BJ (cell line): ENCODE measurements at regions of chr19 and their contacts with region 1.

Region 1: DNA sequence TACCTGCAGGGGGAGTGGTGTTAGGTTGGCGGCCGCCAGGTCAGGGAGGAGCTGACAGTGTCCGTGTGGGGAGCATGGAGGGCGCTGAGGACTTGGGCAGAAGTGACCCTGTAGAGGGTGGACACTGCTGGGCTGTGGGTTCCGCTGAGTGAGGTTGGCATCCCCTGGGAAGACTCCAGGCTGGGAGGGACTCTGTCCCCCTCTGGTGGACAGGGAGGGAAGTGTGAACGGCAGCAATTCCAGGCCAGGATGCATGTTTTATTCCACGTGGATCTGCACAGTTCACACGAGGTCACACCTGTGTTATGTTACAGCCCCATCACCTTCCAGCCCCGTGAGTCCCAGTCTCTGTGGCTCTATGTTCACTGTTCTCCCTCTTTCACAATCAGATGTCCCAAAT is 1.7 kb upstream of the PSG1 start:
- DNase-seq: no peak
- H3K4me3 ChIP-seq: no peak overlapping the region
- H3K27me3 ChIP-seq: no peaks in the 10 kb centered on the region
- CTCF ChIP-seq: peak; percentile 53

Region 2: DNA sequence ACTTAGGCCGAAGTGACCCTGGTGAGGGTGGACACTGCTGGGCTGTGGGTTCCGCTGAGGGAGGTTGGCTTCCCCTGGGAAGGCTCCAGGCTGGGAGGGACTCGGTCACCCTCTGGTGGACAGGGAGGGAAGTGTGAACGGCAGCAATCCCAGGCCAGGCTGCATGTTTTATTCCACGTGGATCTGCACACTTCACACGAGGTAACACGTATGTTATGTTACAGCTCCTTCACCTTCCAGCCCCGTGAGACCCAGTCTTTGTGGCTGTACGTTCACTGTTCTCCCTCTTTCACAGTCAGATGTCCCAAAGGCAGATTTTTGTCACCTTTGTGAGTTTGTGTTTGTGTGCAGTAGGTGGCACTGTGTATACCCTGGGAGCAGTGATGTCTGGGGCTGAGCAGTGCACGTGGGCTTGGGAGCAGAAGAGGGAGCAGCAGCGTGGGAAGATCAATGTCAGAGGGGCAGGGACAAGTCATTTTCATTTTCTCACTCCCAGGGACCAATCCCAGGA is 38.3 kb after region 1 on chr19:
- CTCF ChIA-PET with region 1: interaction called, 15 read pairs
- POLR2A ChIA-PET with region 1: no interaction called
- DNase-seq: no peak
- H3K4me3 ChIP-seq: no peak overlapping the region
- H3K27me3 ChIP-seq: no peaks in the 10 kb centered on the region
- CTCF ChIP-seq: peak; percentile 49

Region 3: GRCh38 chr19:43311706-43312105 is 430.5 kb after region 1 on chr19:
- CTCF ChIA-PET with region 1: no interaction called
- POLR2A ChIA-PET with region 1: interaction called, 13 read pairs
- DNase-seq: peak; percentile 26
- H3K4me3 ChIP-seq: no peak overlapping the region
- H3K27me3 ChIP-seq: no peaks in the 10 kb centered on the region
- CTCF ChIP-seq: no peak